CD4-positive, alpha-beta memory T cell (primary cell): ENCODE measurements at regions of chr11 and their contacts with region 1.

Region 1: DNA sequence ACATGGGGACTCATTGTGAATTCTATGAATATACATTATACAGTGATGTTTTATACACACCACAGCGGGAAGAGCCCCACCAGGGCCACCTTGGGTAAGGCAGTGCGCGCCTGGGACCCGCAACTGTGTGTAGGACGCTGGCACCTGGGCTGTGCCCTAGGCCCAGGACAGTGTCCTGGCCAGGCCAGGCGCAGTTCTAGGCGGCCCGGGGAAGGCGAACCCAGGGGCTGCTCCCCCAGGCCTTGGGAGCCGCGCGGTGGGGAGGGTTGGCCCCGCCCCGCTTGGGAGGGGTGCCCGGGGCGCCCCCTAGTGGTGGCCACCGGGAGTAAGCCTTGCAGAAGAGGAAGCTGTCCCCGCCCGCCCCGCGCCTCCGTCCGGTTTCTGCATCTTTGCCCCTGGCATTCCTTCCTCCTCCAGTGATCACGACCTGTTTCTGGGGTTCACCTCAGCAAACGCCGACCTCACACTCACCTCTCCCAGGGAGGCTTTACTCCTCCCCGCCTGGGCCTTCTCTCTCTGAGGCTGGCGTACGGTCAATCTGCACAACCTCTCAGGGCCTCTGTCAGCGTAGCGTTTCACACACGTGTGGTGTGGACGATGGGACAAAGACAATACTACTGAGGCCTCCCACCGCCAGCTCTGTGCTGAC is 9.5 kb upstream of the EHD1 start:
- DNase-seq: peak; percentile 74 to 86 (median 83)
- H3K4me3 ChIP-seq: peak overlapping the region in 1 of 2 donors; percentile 19
- H3K4me3 Mint-ChIP-seq: peak overlapping the region; percentile 68 to 88 (median 82)
- H3K27ac ChIP-seq: peak overlapping the region; percentile 45
- H3K27ac Mint-ChIP-seq: peak overlapping the region; percentile 54 to 94 (median 89)
- H3K4me1 ChIP-seq: peaks cover 33% of the 10 kb centered on the region
- H3K4me1 Mint-ChIP-seq: peaks cover 17 to 42% (median 24%) of the 10 kb centered on the region in 4 donors
- H3K27me3 ChIP-seq: no peaks in the 10 kb centered on the region
- H3K27me3 Mint-ChIP-seq: no peaks in the 10 kb centered on the region

Region 2: DNA sequence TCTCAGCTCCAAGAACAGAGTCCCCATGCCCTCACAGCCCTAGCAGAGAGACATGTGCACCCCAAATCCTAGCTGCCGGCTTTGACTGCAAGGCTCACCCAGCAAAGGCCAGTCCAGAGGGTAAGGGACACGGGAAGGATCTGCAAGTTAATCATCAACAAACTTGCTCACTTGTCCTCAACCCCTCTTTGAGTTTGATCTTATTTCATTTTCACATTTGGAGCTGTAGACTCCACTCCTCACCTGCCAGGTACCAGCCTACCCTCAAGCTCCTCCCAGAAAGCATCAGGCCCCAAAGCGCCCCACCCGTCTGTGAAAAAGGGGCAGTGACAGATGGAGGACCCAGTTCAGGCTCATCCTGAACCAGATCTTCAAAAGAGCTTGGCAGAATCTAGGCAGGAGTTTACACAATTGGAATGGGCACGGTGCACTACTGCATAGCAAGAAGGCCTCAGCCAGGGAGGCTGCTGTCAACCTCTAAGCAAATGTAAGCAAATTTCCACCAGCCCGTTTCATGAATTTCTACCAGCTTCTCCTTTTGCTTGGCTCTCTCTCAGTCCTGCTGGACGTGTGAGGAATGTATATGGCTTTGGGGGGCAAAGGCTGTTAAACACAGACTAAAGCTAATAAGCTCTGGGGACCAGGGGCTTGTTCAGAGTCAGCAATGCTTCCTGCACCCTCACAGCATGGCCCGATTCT is 14.9 kb before region 1 on chr11:
- CTCF ChIA-PET with region 1: interaction called, 1,245 read pairs
- POLR2A ChIA-PET with region 1: interaction called, 2,105 read pairs
- intact Hi-C with region 1: loop called (anchors 1 kb)
- DNase-seq: no peak
- H3K4me3 ChIP-seq: peak overlapping the region in 1 of 2 donors; percentile 10
- H3K4me3 Mint-ChIP-seq: peak overlapping the region; percentile 57 to 92 (median 80)
- H3K27ac ChIP-seq: peak overlapping the region; percentile 42
- H3K27ac Mint-ChIP-seq: peak overlapping the region; percentile 19 to 99 (median 86)
- H3K4me1 ChIP-seq: peaks cover 87% of the 10 kb centered on the region
- H3K4me1 Mint-ChIP-seq: peaks cover 51 to 95% (median 70%) of the 10 kb centered on the region in 4 donors
- H3K27me3 ChIP-seq: no peaks in the 10 kb centered on the region
- H3K27me3 Mint-ChIP-seq: no peaks in the 10 kb centered on the region